CD8-positive, alpha-beta T cell (primary cell): ENCODE measurements at regions of chr6 and their contacts with region 1.

Region 1: DNA sequence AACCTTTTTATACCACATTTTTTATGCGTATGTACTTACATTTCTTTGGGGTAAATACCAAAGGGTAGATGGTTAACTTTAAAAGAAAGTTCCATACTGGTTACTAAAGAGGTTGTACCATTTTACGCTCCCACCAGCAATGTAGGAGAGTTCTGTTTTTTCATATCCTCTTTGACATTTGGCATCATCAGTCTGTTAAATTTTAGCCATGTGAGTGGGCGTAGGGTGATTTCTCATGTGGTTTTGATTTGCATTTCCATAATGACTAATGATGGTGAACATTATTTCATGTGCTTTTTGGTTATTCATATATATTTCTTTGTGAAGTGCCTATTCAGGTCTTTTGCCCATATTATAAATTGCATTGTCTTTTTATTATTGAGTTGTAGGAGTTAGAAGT is 194.2 kb downstream of the PRL start:
- DNase-seq: no peak
- ATAC-seq: no peak
- H3K4me3 ChIP-seq: no peak overlapping the region
- H3K4me3 Mint-ChIP-seq: no peak overlapping the region
- H3K27ac ChIP-seq: no peak overlapping the region
- H3K27ac Mint-ChIP-seq: no peak overlapping the region
- H3K4me1 ChIP-seq: no peaks in the 10 kb centered on the region
- H3K4me1 Mint-ChIP-seq: no peaks in the 10 kb centered on the region
- H3K27me3 ChIP-seq: no peaks in the 10 kb centered on the region
- H3K27me3 Mint-ChIP-seq: no peaks in the 10 kb centered on the region
- CTCF ChIP-seq: no peak

Region 2: DNA sequence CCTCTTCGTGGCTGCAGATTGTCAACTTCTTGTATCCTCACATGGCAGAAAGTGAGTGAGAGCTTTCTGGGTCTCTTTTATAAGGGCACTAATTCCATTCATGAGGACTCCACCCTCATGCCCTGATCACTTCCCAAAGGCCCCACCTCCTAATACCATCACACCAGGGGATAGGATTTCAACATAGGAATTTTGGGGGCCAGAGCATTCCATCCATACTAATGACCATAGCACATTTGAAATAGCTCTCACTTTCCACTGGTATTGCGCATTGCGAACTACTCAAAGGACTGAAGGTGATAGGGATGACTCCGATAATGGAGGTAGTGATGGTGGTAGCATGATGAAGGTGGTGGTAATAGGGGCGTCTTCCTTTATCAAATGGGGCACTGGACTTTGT is 130.1 kb before region 1 on chr6:
- CTCF ChIA-PET with region 1: no interaction called
- POLR2A ChIA-PET with region 1: no interaction called
- intact Hi-C with region 1: no loop called
- DNase-seq: no peak
- ATAC-seq: no peak
- H3K4me3 ChIP-seq: no peak overlapping the region
- H3K4me3 Mint-ChIP-seq: no peak overlapping the region
- H3K27ac ChIP-seq: no peak overlapping the region
- H3K27ac Mint-ChIP-seq: no peak overlapping the region
- H3K4me1 ChIP-seq: no peaks in the 10 kb centered on the region
- H3K4me1 Mint-ChIP-seq: peaks cover 6% of the 10 kb centered on the region
- H3K27me3 ChIP-seq: no peaks in the 10 kb centered on the region
- H3K27me3 Mint-ChIP-seq: no peaks in the 10 kb centered on the region
- CTCF ChIP-seq: no peak

Region 3: DNA sequence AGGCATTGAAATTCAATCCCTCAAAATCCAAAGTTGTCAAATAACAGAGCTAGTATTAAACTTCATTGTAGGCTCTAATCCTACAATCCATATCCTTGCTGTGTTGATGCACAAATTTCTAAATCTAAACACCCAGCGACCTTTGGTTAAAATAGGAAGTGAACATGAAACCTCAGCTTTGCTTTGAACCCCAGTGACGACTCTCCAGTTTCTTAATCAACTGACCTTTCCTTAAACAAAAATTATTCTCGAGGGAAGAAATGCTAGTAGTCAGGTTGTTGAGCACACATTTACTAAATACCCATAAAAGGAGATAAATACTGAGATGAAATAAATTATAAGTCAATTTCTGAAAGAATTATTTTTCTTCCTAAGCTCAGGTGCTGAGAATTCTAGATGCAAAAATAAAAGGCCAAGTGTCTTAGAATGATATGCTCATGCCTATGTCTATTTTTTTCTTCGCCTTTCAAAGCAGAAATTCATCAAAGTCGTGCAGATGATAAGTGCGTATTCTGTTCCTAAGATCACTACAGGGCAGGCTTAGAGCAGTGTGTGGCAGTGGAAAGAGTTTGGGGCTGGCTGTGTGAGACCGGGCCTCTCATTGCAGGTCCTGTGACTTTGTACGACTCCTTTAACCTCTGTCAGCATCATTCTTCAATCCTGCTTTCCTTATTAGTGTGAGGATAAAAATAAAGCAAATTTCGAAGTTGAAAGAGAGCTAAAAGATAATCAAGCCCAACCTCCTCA is 14.5 kb before region 1 on chr6:
- CTCF ChIA-PET with region 1: no interaction called
- POLR2A ChIA-PET with region 1: interaction called, 3 read pairs
- intact Hi-C with region 1: loop called in 1 of 2 experiments (anchors 1 kb)
- DNase-seq: no peak
- ATAC-seq: no peak
- H3K4me3 ChIP-seq: no peak overlapping the region
- H3K4me3 Mint-ChIP-seq: no peak overlapping the region
- H3K27ac ChIP-seq: no peak overlapping the region
- H3K27ac Mint-ChIP-seq: no peak overlapping the region
- H3K4me1 ChIP-seq: no peaks in the 10 kb centered on the region
- H3K4me1 Mint-ChIP-seq: peaks cover 12% of the 10 kb centered on the region
- H3K27me3 ChIP-seq: no peaks in the 10 kb centered on the region
- H3K27me3 Mint-ChIP-seq: no peaks in the 10 kb centered on the region
- CTCF ChIP-seq: no peak

Region 4: DNA sequence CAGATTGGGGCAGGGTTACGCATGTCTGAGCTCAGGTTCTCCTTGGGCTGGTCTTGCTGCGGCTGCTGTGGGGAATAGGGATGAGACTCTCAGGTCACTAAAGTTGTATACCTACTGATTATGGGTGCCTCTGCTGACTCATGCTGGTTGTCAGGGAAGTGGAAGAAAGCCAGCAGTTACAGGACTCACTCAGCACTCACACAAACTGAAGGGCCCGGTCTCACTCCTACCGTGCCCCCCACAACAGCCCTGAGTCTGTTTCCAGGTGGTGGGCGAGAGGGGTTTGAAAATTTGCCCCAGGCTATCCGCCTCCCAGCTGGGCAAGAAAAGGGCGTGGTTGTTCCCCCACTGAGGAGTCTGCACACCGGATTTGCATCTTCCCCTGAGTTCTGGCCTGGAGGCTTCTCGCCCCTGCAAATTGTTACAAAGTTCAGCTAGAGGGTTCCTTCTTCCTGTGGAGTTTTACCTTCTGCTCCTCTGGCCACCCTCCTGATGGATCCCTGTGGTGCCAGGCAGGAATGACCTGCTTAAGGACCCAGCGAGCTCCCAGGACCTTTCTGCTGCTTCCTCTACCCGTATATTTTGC is 1125.9 kb after region 1 on chr6:
- CTCF ChIA-PET with region 1: no interaction called
- POLR2A ChIA-PET with region 1: no interaction called
- intact Hi-C with region 1: no loop called
- DNase-seq: no peak
- ATAC-seq: no peak
- H3K4me3 ChIP-seq: no peak overlapping the region
- H3K4me3 Mint-ChIP-seq: no peak overlapping the region
- H3K27ac ChIP-seq: no peak overlapping the region
- H3K27ac Mint-ChIP-seq: no peak overlapping the region
- H3K4me1 ChIP-seq: no peaks in the 10 kb centered on the region
- H3K4me1 Mint-ChIP-seq: no peaks in the 10 kb centered on the region
- H3K27me3 ChIP-seq: no peaks in the 10 kb centered on the region
- H3K27me3 Mint-ChIP-seq: no peaks in the 10 kb centered on the region
- CTCF ChIP-seq: no peak